Activated CD4-positive, alpha-beta memory T cell treated with anti-CD3 and anti-CD28 coated beads for 36 hours (primary cell): ENCODE measurements at regions of chr5 and their contacts with region 1.

Region 1: DNA sequence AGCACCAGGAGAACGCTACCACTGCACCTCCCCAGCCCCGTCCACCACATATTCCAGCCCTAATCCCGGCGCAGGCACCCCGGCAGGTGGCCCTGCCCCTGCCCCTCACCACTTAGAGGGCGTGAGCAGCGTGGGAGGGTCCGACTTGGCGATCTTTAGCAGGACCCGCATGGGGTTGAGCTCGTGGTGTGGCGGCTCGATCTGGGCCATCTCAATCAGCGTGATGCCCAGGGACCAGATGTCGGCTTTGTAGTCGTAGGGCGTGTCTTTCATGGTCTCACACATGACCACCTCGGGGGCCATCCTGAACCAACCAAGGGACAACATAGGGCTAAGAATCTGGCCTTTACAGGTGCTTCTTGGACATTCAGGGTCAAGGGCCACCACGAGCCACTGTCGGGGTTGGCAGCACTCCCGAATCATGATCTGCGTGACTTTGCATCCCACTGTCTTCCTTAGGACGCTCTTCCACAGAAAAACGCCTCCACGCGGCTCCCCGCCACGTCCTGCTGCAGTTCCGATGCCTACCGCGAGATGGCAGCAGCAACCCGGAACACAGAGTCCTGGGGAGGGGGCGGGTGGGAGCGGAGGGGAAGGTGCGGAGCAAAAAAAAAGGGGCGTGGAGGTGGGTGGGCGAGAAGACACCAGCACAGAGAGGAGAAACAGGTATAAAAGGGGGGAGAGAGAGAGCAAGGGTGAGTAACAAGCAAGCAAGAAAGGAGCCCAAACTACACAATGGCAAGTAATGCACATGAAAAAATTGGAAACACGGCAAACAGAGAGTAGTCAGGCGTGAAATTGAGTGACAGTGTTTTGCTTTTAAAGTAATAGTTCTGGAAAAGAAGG is 81.3 kb downstream of the STK10 start:
- DNase-seq: peak; percentile 73
- H3K4me3 Mint-ChIP-seq: no peak overlapping the region
- H3K27ac Mint-ChIP-seq: peak overlapping the region; percentile 79
- H3K4me1 Mint-ChIP-seq: peaks cover 57% of the 10 kb centered on the region
- H3K27me3 Mint-ChIP-seq: no peaks in the 10 kb centered on the region

Region 2: GRCh38 chr5:171984748-171985419 is 121.8 kb before region 1 on chr5:
- CTCF ChIA-PET with region 1: no interaction called
- POLR2A ChIA-PET with region 1: no interaction called
- intact Hi-C with region 1: loop called (anchors 5 kb)
- DNase-seq: peak; percentile 69
- H3K4me3 Mint-ChIP-seq: no peak overlapping the region
- H3K27ac Mint-ChIP-seq: peak overlapping the region; percentile 52
- H3K4me1 Mint-ChIP-seq: peaks cover 54% of the 10 kb centered on the region
- H3K27me3 Mint-ChIP-seq: no peaks in the 10 kb centered on the region

Region 3: DNA sequence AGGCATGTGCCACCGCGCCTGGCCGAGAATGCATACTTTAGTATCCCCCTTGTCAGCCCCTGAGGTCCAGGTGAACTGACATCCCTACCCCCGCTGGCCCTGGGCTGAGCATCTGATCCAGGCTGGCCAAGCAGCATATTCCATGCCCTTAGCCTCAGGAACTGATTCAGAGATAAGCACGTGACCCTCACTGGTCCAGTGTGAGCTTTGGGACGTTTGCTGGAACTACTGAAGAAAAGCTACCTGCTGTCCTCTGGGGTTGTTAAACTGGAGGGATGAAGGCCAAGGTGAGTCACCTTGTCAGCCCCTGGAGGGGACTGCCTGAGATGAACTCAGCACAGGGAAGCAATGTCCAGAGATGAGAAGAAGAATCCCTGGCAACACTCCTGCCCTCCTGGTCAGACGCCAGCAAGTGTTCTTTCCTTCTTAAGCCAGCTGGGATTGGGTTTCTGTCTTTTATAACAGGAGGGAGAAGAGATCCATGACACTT is 41.2 kb before region 1 on chr5:
- CTCF ChIA-PET with region 1: interaction called, 5 read pairs
- POLR2A ChIA-PET with region 1: interaction called, 4 read pairs
- intact Hi-C with region 1: loop called (anchors 1 kb)
- DNase-seq: no peak
- H3K4me3 Mint-ChIP-seq: no peak overlapping the region
- H3K27ac Mint-ChIP-seq: no peak overlapping the region
- H3K4me1 Mint-ChIP-seq: peaks cover 50% of the 10 kb centered on the region
- H3K27me3 Mint-ChIP-seq: no peaks in the 10 kb centered on the region

Region 4: GRCh38 chr5:172173831-172174153 is 67.1 kb after region 1 on chr5:
- CTCF ChIA-PET with region 1: interaction called, 8 read pairs
- POLR2A ChIA-PET with region 1: interaction called, 38 read pairs
- intact Hi-C with region 1: loop called (anchors 1 kb)
- DNase-seq: peak; percentile 95
- H3K4me3 Mint-ChIP-seq: peak overlapping the region; percentile 89
- H3K27ac Mint-ChIP-seq: peak overlapping the region; percentile 99
- H3K4me1 Mint-ChIP-seq: peaks cover 95% of the 10 kb centered on the region
- H3K27me3 Mint-ChIP-seq: no peaks in the 10 kb centered on the region

Region 5: GRCh38 chr5:172223901-172224873 is 117.5 kb after region 1 on chr5:
- CTCF ChIA-PET with region 1: no interaction called
- POLR2A ChIA-PET with region 1: interaction called, 5 read pairs
- intact Hi-C with region 1: loop called (anchors 1 kb)
- DNase-seq: peak; percentile 84
- H3K4me3 Mint-ChIP-seq: no peak overlapping the region
- H3K27ac Mint-ChIP-seq: peak overlapping the region; percentile 70
- H3K4me1 Mint-ChIP-seq: peaks cover 33% of the 10 kb centered on the region
- H3K27me3 Mint-ChIP-seq: peaks cover 4% of the 10 kb centered on the region

Region 6: DNA sequence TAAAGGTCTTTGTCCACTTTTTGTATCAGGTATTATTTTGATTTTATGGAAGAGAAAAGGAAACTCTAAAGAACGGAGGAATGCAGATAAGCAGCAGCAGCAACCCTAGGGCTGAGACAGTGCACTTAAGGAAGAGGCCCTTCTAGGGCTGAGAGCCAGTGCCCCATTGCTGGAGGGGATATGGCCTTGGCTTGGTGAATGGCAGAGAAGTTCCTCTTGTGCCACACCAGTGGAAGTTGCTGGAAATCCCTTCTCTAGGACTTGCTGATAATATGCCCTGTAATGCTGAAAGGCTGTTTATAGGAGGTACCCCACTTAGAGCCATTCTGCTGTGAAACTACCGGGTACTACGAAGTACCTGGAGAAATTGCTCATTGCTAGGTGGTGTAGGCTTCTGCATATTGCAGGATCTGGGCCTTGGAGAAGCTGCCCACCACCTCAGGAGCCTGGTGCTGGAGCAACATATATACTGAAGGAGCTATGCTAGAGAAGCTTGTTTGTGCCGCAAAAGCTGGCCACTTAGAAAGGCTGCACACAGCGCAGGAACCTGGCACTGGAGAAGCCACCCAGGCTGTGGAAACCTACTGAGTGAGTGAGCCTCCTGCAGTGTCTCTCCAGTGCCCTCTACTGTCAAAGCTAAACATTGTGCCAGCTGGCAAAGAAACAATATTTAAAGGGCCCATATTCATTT is 186.5 kb after region 1 on chr5:
- CTCF ChIA-PET with region 1: interaction called, 19 read pairs
- POLR2A ChIA-PET with region 1: no interaction called
- intact Hi-C with region 1: loop called (anchors 1 kb)
- DNase-seq: peak; percentile 72
- H3K4me3 Mint-ChIP-seq: no peak overlapping the region
- H3K27ac Mint-ChIP-seq: no peak overlapping the region
- H3K4me1 Mint-ChIP-seq: no peaks in the 10 kb centered on the region
- H3K27me3 Mint-ChIP-seq: peaks cover 4% of the 10 kb centered on the region

Region 7: DNA sequence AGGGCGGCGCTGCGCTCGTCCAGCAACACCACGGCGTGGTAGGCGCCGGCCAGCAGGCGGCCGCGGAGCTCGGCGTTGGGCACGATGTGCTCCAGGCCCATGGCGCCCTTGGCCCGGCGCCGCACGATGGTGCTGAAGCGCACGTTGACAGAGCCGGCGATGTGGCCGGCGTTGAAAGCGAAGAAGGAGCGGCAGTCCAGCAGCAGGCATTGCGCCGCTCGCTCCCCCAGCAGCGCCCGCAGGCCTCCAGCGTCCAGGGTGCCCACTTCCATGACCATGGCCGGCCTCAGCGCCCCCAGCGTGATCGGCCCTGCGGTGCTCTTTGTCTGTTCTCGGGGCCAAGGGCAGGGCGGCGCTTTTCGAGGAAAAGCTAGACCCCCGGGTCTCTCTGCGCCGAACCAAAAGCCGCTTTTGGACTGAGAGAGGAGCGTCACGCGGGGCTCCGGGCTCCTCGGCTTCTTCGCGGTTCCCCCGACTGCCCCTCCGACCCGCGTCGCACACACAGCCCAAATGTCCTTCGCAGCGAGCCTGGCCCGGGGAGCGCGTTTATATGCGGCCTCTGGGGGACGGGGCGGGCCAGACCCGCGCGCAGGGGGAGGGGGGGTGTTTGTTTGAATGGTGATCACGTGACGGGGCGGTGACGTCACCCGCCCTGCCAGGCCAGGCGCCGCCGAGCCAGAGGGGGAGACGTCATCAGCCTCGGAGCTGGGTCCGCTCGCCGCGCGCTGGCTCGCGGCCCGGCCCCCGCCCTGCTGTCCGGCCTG is 664.1 kb after region 1 on chr5 and contains the start of gene DUSP1:
- CTCF ChIA-PET with region 1: no interaction called
- POLR2A ChIA-PET with region 1: no interaction called
- intact Hi-C with region 1: loop called (anchors 5 kb)
- DNase-seq: peak; percentile 97
- H3K4me3 Mint-ChIP-seq: peak within 1 kb of the TSS; percentile 89
- H3K27ac Mint-ChIP-seq: peak within 1 kb of the TSS; percentile 92
- H3K4me1 Mint-ChIP-seq: peaks cover 65% of the 10 kb centered on the region
- H3K27me3 Mint-ChIP-seq: no peaks in the 10 kb centered on the region
- total RNA-seq, gene DUSP1: 10.6 to 10.7 TPM